ENCODE measurements at regions of chrX and their contacts with region 1.

Region 1: DNA sequence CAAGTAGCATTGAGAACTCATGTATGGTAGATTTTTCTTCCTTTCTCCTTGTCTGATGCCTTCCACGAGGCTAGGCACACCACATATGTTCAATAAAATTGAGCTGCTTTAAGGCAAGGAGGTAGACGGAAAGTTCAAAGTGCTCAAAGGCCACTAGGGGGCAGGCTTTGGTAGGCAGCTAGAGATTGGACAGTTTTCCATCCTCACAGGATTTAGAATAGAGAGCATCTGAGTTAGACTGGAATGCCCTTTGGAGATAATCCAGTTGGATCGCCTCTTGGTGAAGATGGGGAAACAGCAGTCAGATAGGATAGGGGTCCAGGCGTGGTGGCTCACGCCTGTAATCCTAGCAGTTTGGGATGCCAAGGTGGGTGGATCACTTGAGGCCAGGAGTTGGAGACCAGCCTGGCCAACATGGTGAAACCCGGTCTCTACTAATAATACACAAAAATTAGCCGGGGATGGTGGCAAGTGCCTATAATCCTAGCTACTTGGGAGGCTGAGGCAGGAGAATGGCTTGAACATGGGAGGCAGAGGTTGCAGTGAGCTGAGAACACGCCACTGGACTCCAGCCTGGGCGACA is 30.4 kb downstream of the ELF4 start:
- DNase-seq: peak; percentile 67
- H3K4me3 ChIP-seq: no peak overlapping the region
- H3K27ac ChIP-seq: no peak overlapping the region
- H3K4me1 ChIP-seq: peaks cover under 1 to 16% (median 5%) of the 10 kb centered on the region in 4 donors
- H3K27me3 ChIP-seq: no peaks in the 10 kb centered on the region
- CTCF ChIP-seq: peak; percentile 59 to 71 (median 63)
- EP300 ChIP-seq: no peak
- POLR2A ChIP-seq: no peak

Region 2: DNA sequence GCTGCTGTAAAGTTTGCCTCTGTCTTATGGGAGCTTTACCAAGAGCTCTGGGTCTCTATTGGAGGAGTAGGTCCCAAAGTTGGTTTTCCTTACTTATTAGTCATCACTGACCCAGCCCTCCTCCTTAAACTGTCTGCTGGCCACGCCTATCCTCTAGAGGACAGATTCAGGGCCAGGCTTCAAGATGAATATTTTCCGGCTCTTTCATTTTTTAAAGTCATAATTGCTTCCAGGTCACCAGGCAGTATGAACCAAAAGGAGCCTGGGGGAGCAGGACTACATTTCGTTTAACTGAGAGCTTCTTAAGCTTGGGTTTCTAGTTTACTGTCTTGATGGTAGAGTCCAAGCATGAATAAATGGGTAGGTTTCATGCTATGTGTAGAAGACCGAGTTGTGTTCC is 83.8 kb before region 1 on chrX:
- in situ Hi-C with region 1: no loop called
- intact Hi-C with region 1: no loop called
- DNase-seq: no peak
- H3K4me3 ChIP-seq: no peak overlapping the region
- H3K27ac ChIP-seq: no peak overlapping the region
- H3K4me1 ChIP-seq: no peaks in the 10 kb centered on the region
- H3K27me3 ChIP-seq: no peaks in the 10 kb centered on the region
- CTCF ChIP-seq: no peak
- EP300 ChIP-seq: no peak
- POLR2A ChIP-seq: no peak

Region 3: DNA sequence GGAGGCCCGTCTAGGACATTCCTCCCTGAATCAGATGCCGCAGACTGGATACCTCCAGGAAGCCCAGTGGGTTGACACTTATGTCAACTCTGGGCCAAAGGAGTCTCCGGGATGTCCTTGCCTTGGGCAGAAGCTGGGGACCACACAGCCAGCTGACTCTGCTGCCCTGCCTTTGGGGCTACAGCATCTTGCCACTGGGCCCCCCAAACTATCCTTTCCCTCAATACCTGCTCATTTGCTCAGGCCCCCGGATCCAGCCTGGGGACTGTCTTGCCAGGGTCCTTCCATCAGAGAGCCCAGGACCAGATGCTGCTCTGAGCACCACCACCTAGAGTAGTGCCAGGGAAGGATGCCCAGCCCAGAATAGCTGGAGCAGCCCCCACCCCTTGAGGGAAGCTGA is 110.9 kb after region 1 on chrX:
- in situ Hi-C with region 1: loop called in 2 of 4 experiments (anchors 10 to 25 kb)
- intact Hi-C with region 1: loop called (anchors 5 kb)
- DNase-seq: no peak
- H3K4me3 ChIP-seq: no peak overlapping the region
- H3K27ac ChIP-seq: no peak overlapping the region
- H3K4me1 ChIP-seq: no peaks in the 10 kb centered on the region
- H3K27me3 ChIP-seq: no peaks in the 10 kb centered on the region
- CTCF ChIP-seq: no peak
- EP300 ChIP-seq: no peak
- POLR2A ChIP-seq: no peak

Region 4: DNA sequence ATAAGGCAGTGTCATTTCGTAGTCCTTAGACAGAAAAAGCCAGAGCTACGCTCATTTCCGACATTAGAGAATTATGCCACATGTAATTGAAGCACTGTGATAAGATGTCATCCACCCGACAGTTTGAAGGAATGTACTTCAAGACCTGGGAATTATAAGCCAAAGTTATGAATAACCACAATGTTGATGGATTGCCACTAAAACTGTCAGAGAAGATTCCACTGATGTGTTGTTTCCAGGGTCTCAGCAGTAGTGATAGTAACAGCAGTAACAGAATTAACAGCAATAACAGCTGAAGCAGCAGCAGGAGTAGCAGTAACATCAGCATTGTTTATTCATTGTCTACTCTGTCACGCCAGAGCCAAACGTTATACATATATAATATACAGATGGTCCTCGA is 116.6 kb after region 1 on chrX:
- in situ Hi-C with region 1: loop called in 2 of 4 experiments (anchors 10 to 25 kb)
- intact Hi-C with region 1: loop called (anchors 5 kb)
- DNase-seq: no peak
- H3K4me3 ChIP-seq: no peak overlapping the region
- H3K27ac ChIP-seq: no peak overlapping the region
- H3K4me1 ChIP-seq: no peaks in the 10 kb centered on the region
- H3K27me3 ChIP-seq: no peaks in the 10 kb centered on the region
- CTCF ChIP-seq: no peak
- EP300 ChIP-seq: no peak
- POLR2A ChIP-seq: no peak